ENCODE measurements at regions of chr17 and their contacts with region 1.

Region 1: GRCh38 chr17:40866838-40867237 is at the start of gene KRT12:
- DNase-seq: no peak
- H3K4me3 ChIP-seq: no peak within 1 kb of the TSS
- H3K27me3 ChIP-seq: no peaks in the 10 kb centered on the region
- CTCF ChIP-seq: no peak
- polyA plus RNA-seq, gene KRT12: not detected in 2 replicates

Region 2: DNA sequence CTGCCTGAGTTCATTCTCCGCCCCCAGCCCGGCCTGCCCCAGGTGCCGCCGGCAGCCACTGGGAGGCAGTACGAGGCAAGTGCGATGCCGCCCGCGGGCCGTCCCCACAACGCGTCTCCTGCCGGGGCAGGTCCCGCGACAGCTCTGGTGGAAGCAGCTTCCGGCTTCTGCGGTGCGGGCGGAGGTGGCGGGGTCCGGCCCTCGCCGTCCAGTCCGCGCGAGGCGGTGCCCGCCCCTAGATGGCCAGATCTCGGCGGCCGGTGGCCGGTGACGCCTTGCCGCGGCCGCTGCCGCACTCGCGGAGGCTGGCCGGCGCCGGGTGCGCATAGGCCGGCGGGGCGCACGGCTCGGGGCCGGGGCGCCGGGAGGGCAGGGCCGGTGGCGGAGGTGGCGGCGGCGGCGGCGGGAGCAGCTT is 504.1 kb before region 1 on chr17:
- CTCF ChIA-PET with region 1: no interaction called
- POLR2A ChIA-PET with region 1: no interaction called
- DNase-seq: no peak
- H3K4me3 ChIP-seq: peak overlapping the region; percentile 43
- H3K27me3 ChIP-seq: no peaks in the 10 kb centered on the region
- CTCF ChIP-seq: peak; percentile 85

Region 3: GRCh38 chr17:40884708-40885512 is 18.1 kb after region 1 on chr17 and contains the start of gene KRT20:
- CTCF ChIA-PET with region 1: interaction called, 5 read pairs
- POLR2A ChIA-PET with region 1: interaction called, 11 read pairs
- DNase-seq: no peak
- H3K4me3 ChIP-seq: no peak within 1 kb of the TSS
- H3K27me3 ChIP-seq: no peaks in the 10 kb centered on the region
- CTCF ChIP-seq: peak; percentile 12; the same call in 1 of the 2 replicates
- polyA plus RNA-seq, gene KRT20: not detected in 2 replicates

Region 4: GRCh38 chr17:40937384-40937819 is 70.6 kb after region 1 on chr17 and contains the start of gene KRT23:
- CTCF ChIA-PET with region 1: no interaction called
- POLR2A ChIA-PET with region 1: no interaction called
- DNase-seq: no peak
- H3K4me3 ChIP-seq: no peak within 1 kb of the TSS
- H3K27me3 ChIP-seq: no peaks in the 10 kb centered on the region
- CTCF ChIP-seq: no peak
- polyA plus RNA-seq, gene KRT23: 0.09 and 0.11 TPM in 2 replicates

Measured in BJ (cell line).